Aorta (tissue), 5 donors: ENCODE measurements at regions of chr4 and their contacts with region 1.

Region 1: DNA sequence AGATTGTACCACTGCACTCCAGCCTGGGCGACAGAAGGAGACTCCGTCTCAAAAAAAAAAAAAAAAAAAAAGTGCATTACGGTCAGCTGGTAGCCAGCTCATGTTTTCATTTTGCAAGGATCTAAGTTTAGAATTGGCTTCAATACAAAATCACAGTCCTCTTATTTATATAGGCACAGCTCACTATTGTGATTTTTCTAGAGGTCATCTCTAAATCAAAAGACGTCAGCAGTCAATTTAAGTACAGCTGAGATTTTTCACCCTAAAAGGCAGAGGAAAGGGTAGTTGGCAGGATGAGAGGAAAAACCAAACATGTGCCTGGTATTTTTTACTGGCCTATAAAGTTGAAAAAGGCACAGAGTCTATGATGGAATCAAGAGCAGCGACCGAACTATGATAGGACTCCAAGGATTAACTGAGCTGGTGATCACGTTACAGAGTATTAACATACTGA is 30.8 kb downstream of the ASB5 start:
- DNase-seq: no peak
- ATAC-seq: peak; percentile 85
- H3K4me3 ChIP-seq: no peak overlapping the region
- H3K27ac ChIP-seq: peak overlapping the region; percentile 91 to 92
- H3K4me1 ChIP-seq: no peaks in the 10 kb centered on the region
- H3K27me3 ChIP-seq: no peaks in the 10 kb centered on the region

Region 2: DNA sequence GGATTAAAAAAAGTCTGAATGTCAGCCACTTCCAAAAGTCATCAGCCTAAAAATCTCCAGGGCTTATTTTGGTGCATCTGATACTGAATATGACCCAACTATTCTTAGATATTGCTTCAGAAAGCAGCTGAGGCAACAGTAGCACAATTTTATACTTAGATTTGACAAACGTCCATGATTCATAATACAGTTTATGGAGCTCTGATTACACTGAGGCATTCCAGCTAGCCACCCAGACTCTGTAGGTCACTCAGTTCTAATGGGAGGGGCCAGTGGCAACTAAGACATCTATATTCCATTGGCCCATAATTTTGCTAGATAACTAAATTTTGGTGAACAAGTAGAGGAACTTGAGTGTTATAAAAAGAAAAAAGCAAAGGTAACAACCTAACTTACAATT is 53.1 kb before region 1 on chr4:
- intact Hi-C with region 1: loop called (anchors 2 to 5 kb)
- DNase-seq: no peak
- ATAC-seq: peak; percentile 78
- H3K4me3 ChIP-seq: no peak overlapping the region
- H3K27ac ChIP-seq: no peak overlapping the region
- H3K4me1 ChIP-seq: peaks cover 2 to 3% of the 10 kb centered on the region in 2 donors
- H3K27me3 ChIP-seq: no peaks in the 10 kb centered on the region

Region 3: GRCh38 chr4:176270669-176271068 is 32.5 kb after region 1 on chr4:
- intact Hi-C with region 1: loop called in 1 of 2 experiments (anchors 5 kb)
- DNase-seq: peak in 1 of 2 donors; percentile 48
- ATAC-seq: no peak
- H3K4me3 ChIP-seq: no peak overlapping the region
- H3K27ac ChIP-seq: no peak overlapping the region
- H3K4me1 ChIP-seq: peaks cover 0 to 3% of the 10 kb centered on the region in 2 donors
- H3K27me3 ChIP-seq: no peaks in the 10 kb centered on the region

Region 4: GRCh38 chr4:176319704-176320339 is 81.6 kb after region 1 on chr4 and contains the start of gene SPCS3:
- intact Hi-C with region 1: loop called in 1 of 2 experiments (anchors 2 kb)
- DNase-seq: peak; percentile 98 to 99
- ATAC-seq: peak; percentile 99
- H3K4me3 ChIP-seq: peak within 1 kb of the TSS; percentile 88 to 92
- H3K27ac ChIP-seq: peak within 1 kb of the TSS; percentile 92 to 97
- H3K4me1 ChIP-seq: no peaks in the 10 kb centered on the region
- H3K27me3 ChIP-seq: no peaks in the 10 kb centered on the region
- total RNA-seq, gene SPCS3: 124 to 168 TPM

Region 5: GRCh38 chr4:176425035-176425434 is 186.9 kb after region 1 on chr4:
- intact Hi-C with region 1: no loop called
- DNase-seq: no peak
- ATAC-seq: no peak
- H3K4me3 ChIP-seq: no peak overlapping the region
- H3K27ac ChIP-seq: no peak overlapping the region
- H3K4me1 ChIP-seq: peaks cover 0 to 1% of the 10 kb centered on the region in 2 donors
- H3K27me3 ChIP-seq: no peaks in the 10 kb centered on the region